Naive thymus-derived CD4-positive, alpha-beta T cell (primary cell): ENCODE measurements at regions of chr10 and their contacts with region 1.

Region 1: DNA sequence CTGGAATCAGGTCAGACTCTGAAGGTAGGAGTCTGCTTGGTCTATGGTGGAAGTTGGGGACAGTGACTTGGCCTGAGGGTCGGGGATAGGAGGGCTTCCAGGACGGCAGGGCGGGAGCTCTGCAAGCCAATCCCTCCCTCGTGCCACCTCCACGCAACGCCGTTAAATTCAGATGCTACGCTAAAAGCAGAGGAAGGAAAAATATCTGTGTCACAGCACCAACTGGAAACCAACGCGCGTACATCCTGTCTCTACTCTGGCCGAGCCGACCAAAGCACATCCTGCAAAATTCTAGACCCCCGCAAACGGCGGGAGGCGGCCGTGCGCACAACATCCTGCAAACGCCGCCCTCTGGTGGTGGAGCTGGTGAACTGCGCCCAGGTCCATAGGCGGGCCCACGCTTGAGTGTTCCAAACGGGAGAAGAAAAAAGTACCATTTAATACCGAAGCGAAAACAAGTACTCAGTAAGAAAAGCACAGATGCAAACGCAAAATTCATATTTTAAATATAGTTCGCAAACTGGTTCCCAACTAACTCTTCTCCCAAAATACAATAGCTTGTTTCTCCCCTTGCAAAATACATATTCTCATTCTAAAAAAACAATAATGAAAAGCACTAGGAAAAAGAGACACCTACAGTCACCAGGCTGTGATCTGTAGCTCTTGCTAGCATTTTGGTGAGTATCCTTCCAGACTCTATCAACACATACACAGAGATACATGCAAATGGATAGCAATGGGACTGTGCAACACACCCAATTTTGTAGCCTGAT is 45.7 kb upstream of the HSPA12A start:
- DNase-seq: peak; percentile 61 to 84 (median 77)
- ATAC-seq: peak; percentile 92
- H3K4me3 ChIP-seq: peak overlapping the region; percentile 36
- H3K4me3 Mint-ChIP-seq: peak overlapping the region in 9 of 10 donors; percentile 29 to 77 (median 59)
- H3K27ac ChIP-seq: no peak overlapping the region
- H3K27ac Mint-ChIP-seq: peak overlapping the region in 7 of 9 donors; percentile 19 to 88 (median 71)
- H3K4me1 ChIP-seq: peaks cover 0 to 5% of the 10 kb centered on the region in 2 donors
- H3K4me1 Mint-ChIP-seq: peaks cover 0 to 17% (median 12%) of the 10 kb centered on the region in 7 donors
- H3K27me3 ChIP-seq: no peaks in the 10 kb centered on the region
- H3K27me3 Mint-ChIP-seq: peaks cover 8 to 48% (median 34%) of the 10 kb centered on the region in 5 donors

Region 2: DNA sequence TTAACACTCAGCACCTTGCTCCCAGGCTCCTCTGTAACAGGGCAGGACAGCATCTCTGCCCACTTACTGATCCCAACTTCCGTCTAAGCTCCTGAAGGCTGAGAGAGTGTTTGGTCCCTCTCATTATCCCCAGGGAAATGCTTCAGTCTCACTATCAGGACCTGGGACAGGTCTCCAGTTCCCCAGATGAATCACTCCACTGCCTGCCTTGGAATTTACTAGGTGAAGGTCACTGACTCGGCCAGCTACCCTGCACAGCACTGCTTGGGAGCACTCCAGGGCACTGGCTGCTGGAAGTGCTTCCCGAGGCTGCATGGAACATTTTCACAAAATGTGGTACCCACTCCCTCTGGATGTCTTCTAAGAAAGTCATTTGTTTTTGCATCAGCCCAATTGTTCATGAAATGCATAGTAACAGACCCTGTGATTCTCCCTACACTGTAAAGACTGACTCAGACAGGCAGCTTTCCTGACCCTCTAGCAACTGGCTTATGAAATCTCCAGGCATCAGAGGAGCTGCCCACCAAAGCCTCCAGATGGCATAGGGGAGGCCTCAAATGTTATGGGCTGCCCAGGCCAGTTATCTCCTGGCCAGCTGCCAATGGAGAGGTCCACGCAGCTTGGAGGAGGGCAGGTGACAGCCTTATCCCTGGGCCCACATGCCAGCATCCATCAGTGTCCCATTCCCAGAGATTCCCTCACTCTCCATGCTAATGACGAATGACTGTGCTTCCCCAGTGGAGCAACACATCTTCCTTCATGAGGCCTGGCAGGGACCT is 604.2 kb before region 1 on chr10:
- CTCF ChIA-PET with region 1: no interaction called
- POLR2A ChIA-PET with region 1: no interaction called
- intact Hi-C with region 1: no loop called
- DNase-seq: no peak
- ATAC-seq: no peak
- H3K4me3 ChIP-seq: no peak overlapping the region
- H3K4me3 Mint-ChIP-seq: no peak overlapping the region
- H3K27ac ChIP-seq: no peak overlapping the region
- H3K27ac Mint-ChIP-seq: no peak overlapping the region
- H3K4me1 ChIP-seq: no peaks in the 10 kb centered on the region
- H3K4me1 Mint-ChIP-seq: no peaks in the 10 kb centered on the region
- H3K27me3 ChIP-seq: no peaks in the 10 kb centered on the region
- H3K27me3 Mint-ChIP-seq: no peaks in the 10 kb centered on the region

Region 3: GRCh38 chr10:116444527-116445142 is 343.4 kb before region 1 on chr10:
- CTCF ChIA-PET with region 1: no interaction called
- POLR2A ChIA-PET with region 1: no interaction called
- intact Hi-C with region 1: loop called in 1 of 2 experiments (anchors 5 kb)
- DNase-seq: peak in 2 of 9 donors; percentile 0 to 2
- ATAC-seq: peak; percentile 54
- H3K4me3 ChIP-seq: no peak overlapping the region
- H3K4me3 Mint-ChIP-seq: no peak overlapping the region
- H3K27ac ChIP-seq: no peak overlapping the region
- H3K27ac Mint-ChIP-seq: no peak overlapping the region
- H3K4me1 ChIP-seq: no peaks in the 10 kb centered on the region
- H3K4me1 Mint-ChIP-seq: no peaks in the 10 kb centered on the region
- H3K27me3 ChIP-seq: no peaks in the 10 kb centered on the region
- H3K27me3 Mint-ChIP-seq: peaks cover 0 to 11% (median 6%) of the 10 kb centered on the region in 5 donors

Region 4: DNA sequence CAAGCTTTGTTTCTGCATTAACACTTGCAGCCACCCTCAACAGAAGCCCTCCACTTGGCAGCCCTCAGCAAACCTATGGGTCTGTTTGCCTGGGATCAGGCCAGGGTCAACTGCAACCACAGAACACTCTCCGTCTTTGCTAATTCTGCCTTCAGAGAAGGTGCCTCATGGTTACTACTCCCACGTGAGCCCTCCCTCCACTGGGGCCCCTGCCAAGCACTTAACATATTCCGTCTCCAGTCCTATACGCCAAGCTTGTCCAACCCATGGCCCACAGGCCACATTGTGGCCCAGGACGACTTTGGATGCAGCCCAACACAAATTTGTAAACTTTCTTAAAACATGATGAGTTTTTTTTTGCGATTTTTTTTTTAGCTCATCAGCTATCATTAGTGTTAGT is 100.4 kb before region 1 on chr10:
- CTCF ChIA-PET with region 1: interaction called, 33 read pairs
- POLR2A ChIA-PET with region 1: no interaction called
- intact Hi-C with region 1: loop called (anchors 1 kb)
- DNase-seq: no peak
- ATAC-seq: no peak
- H3K4me3 ChIP-seq: no peak overlapping the region
- H3K4me3 Mint-ChIP-seq: no peak overlapping the region
- H3K27ac ChIP-seq: no peak overlapping the region
- H3K27ac Mint-ChIP-seq: no peak overlapping the region
- H3K4me1 ChIP-seq: no peaks in the 10 kb centered on the region
- H3K4me1 Mint-ChIP-seq: peaks cover 0 to 3% (median 0%) of the 10 kb centered on the region in 7 donors
- H3K27me3 ChIP-seq: peaks cover 0 to 3% of the 10 kb centered on the region in 2 donors
- H3K27me3 Mint-ChIP-seq: peaks cover 4 to 56% (median 39%) of the 10 kb centered on the region in 5 donors

Region 5: DNA sequence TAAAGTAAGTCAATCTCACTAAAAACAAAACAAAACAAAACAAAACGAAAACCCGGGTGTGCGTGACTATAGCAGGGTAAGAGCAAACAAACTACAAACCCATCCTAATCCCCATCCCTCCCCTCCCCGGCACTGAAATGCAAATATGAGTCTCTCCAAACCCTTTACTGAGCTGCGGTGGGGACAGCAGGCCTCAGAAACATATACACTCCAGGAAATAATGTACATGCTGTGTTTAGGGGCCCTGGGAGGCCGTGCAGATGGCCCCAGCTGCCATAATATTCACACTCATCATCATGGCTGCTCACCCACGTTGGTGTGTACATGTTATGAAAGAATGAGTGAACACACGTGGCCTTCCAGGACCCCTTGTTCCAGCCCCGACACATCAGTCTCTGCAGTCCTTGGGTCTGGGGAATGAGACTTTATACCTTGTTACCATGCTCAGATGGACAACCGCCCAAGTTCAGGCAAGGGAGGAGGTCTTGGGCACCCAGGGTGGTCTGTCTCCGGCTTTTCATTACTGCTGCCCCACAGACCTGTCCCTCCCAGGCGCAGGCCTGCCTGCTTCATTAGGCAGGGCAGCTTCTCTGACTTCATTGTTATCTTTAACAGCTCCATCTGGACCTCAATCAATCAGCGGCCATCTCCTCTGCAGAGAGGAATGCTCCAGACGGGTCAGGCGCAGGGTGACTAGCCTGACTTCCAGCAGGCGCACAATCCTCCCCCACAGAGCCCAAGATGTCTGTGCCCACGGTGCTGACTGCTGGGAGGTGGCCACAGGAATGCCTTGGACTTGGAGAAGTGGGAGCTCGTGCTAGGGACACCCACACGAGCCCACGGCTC is 66.3 kb before region 1 on chr10:
- CTCF ChIA-PET with region 1: no interaction called
- POLR2A ChIA-PET with region 1: no interaction called
- intact Hi-C with region 1: loop called (anchors 2 to 5 kb)
- DNase-seq: no peak
- ATAC-seq: no peak
- H3K4me3 ChIP-seq: no peak overlapping the region
- H3K4me3 Mint-ChIP-seq: peak overlapping the region in 3 of 10 donors; percentile 7 to 77 (median 23)
- H3K27ac ChIP-seq: no peak overlapping the region
- H3K27ac Mint-ChIP-seq: no peak overlapping the region
- H3K4me1 ChIP-seq: peaks cover 17 to 29% of the 10 kb centered on the region in 2 donors
- H3K4me1 Mint-ChIP-seq: peaks cover 27 to 57% (median 50%) of the 10 kb centered on the region in 7 donors
- H3K27me3 ChIP-seq: peaks cover 0 to 34% of the 10 kb centered on the region in 2 donors
- H3K27me3 Mint-ChIP-seq: peaks cover 55 to 82% (median 71%) of the 10 kb centered on the region in 5 donors

Region 6: GRCh38 chr10:116809483-116810119 is 21.5 kb after region 1 on chr10:
- CTCF ChIA-PET with region 1: no interaction called
- POLR2A ChIA-PET with region 1: no interaction called
- intact Hi-C with region 1: no loop called
- DNase-seq: no peak
- ATAC-seq: no peak
- H3K4me3 ChIP-seq: no peak overlapping the region
- H3K4me3 Mint-ChIP-seq: no peak overlapping the region
- H3K27ac ChIP-seq: no peak overlapping the region
- H3K27ac Mint-ChIP-seq: peak overlapping the region in 1 of 9 donors; percentile 65
- H3K4me1 ChIP-seq: no peaks in the 10 kb centered on the region
- H3K4me1 Mint-ChIP-seq: no peaks in the 10 kb centered on the region
- H3K27me3 ChIP-seq: no peaks in the 10 kb centered on the region
- H3K27me3 Mint-ChIP-seq: peaks cover 0 to 28% (median 17%) of the 10 kb centered on the region in 5 donors